Colonic mucosa (tissue), 4 donors: ENCODE measurements at regions of chr4 and their contacts with region 1.

Region 1: GRCh38 chr4:112327965-112328733 is 31.0 kb downstream of the ALPK1 start:
- DNase-seq: no peak
- H3K4me3 ChIP-seq: no peak overlapping the region
- H3K27ac ChIP-seq: no peak overlapping the region
- H3K4me1 ChIP-seq: no peaks in the 10 kb centered on the region
- H3K27me3 ChIP-seq: no peaks in the 10 kb centered on the region
- CTCF ChIP-seq: peak; percentile 18

Region 2: GRCh38 chr4:112523764-112524505 is 195.8 kb after region 1 on chr4:
- intact Hi-C with region 1: loop called (anchors 10 kb)
- DNase-seq: peak; percentile 73
- H3K4me3 ChIP-seq: peak overlapping the region; percentile 27
- H3K27ac ChIP-seq: no peak overlapping the region
- H3K4me1 ChIP-seq: peaks cover 4% of the 10 kb centered on the region
- H3K27me3 ChIP-seq: peaks cover 46% of the 10 kb centered on the region
- CTCF ChIP-seq: peak; percentile 74

Region 3: GRCh38 chr4:112536123-112536522 is 208.0 kb after region 1 on chr4:
- intact Hi-C with region 1: no loop called
- DNase-seq: no peak
- H3K4me3 ChIP-seq: no peak overlapping the region
- H3K27ac ChIP-seq: no peak overlapping the region
- H3K4me1 ChIP-seq: no peaks in the 10 kb centered on the region
- H3K27me3 ChIP-seq: no peaks in the 10 kb centered on the region
- CTCF ChIP-seq: no peak

Region 4: DNA sequence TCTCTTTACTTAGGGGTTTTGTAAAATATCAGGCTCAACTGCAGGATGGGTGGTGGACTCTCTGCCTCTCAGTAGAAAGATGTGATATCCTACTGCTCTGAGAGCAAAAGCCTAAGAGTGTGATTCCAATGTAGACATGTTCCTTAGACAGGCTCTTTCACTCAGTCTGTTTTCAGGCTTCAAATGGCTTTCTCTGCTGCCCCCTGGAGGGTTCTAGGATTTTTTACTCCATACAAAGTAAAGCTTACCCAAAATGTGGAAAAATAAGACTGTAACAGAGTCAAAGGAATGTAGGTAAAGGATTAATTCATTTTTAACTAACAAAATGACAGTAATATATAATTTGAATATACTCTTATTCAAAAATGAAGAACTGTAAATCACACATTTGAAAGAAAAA is 276.4 kb after region 1 on chr4:
- intact Hi-C with region 1: loop called (anchors 10 kb)
- DNase-seq: peak; percentile 45
- H3K4me3 ChIP-seq: no peak overlapping the region
- H3K27ac ChIP-seq: no peak overlapping the region
- H3K4me1 ChIP-seq: no peaks in the 10 kb centered on the region
- H3K27me3 ChIP-seq: no peaks in the 10 kb centered on the region
- CTCF ChIP-seq: peak; percentile 47

Region 5: DNA sequence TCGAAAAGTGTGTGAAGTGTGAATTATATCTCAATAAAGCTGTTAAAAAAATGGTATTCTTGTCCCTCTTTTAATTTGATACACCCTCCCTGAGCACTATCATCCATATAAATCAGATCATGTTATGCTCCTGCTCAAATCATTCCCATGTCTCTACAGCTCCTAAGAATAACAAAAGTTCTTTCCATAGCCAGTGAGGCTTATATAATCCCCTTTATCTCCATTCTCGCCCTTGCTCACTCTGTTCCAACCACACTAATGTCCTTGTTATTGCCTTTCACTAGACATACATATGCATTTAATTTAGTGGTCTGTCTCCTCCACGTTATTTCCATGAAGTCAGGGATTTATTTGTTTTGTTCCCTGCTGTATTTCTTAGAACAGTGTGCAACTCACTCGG is 298.1 kb after region 1 on chr4:
- intact Hi-C with region 1: no loop called
- DNase-seq: no peak
- H3K4me3 ChIP-seq: no peak overlapping the region
- H3K27ac ChIP-seq: no peak overlapping the region
- H3K4me1 ChIP-seq: no peaks in the 10 kb centered on the region
- H3K27me3 ChIP-seq: no peaks in the 10 kb centered on the region
- CTCF ChIP-seq: no peak